ENCODE measurements at regions of chr20 and their contacts with region 1.

Region 1: GRCh38 chr20:49685809-49686208 is 27.9 kb downstream of the B4GALT5 start:
- DNase-seq: no peak
- H3K4me3 ChIP-seq: no peak overlapping the region
- H3K27ac ChIP-seq: no peak overlapping the region
- H3K4me1 ChIP-seq: peaks cover 14% of the 10 kb centered on the region
- H3K27me3 ChIP-seq: no peaks in the 10 kb centered on the region
- CTCF ChIP-seq: no peak
- POLR2A ChIP-seq: no peak

Region 2: GRCh38 chr20:49661560-49662329 is 24.1 kb before region 1 on chr20:
- CTCF ChIA-PET with region 1: interaction called, 10 read pairs
- POLR2A ChIA-PET with region 1: no interaction called
- dilution Hi-C with region 1: no loop called
- intact Hi-C with region 1: loop called (anchors 1 kb)
- DNase-seq: peak; percentile 52
- H3K4me3 ChIP-seq: no peak overlapping the region
- H3K27ac ChIP-seq: no peak overlapping the region
- H3K4me1 ChIP-seq: peaks cover 19% of the 10 kb centered on the region
- H3K27me3 ChIP-seq: no peaks in the 10 kb centered on the region
- CTCF ChIP-seq: no peak
- POLR2A ChIP-seq: no peak

Region 3: DNA sequence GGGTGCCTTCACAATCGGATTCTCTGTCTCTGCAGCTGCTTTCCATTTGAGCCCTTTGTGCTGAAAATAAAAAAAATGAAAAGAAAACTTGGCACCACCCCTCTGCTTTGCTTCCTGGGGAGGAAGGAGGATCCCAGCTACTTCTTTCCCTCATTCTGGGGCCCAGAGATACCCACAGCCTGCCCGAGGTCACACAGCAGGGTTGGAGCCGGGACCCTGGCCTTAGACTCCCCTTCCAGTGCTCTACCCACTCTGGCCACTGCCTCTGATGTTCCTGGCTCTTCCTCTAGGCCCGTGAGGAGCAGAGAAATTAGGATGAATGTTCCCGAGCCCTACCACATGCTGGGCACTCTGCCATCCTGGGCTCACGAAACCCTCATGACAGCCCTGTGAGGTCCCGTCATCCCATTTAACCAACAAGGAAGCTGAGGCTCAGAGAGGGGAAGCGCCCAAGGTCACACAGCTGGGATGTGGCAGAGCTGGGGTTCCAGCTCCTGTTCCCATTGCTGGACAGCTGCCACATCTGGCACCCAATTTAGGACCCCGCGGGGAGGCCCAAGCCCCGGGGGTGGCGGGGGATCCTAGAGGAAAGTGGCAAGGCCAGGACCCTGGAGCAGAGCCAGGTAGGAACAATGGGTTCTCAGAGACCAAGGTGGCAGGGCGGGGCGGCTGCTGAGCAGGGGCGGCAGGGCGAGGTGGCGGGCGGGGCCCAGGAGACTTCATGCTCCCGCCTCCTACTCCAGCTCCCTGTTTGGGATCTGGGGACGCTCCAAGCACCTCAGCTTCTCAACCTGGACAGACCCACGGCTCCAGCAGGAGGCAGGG is 581.4 kb after region 1 on chr20:
- CTCF ChIA-PET with region 1: no interaction called
- POLR2A ChIA-PET with region 1: no interaction called
- dilution Hi-C with region 1: no loop called
- intact Hi-C with region 1: no loop called
- DNase-seq: no peak
- H3K4me3 ChIP-seq: no peak overlapping the region
- H3K27ac ChIP-seq: no peak overlapping the region
- H3K4me1 ChIP-seq: no peaks in the 10 kb centered on the region
- H3K27me3 ChIP-seq: peaks cover 0 to 2% of the 10 kb centered on the region in 2 experiments
- CTCF ChIP-seq: no peak
- POLR2A ChIP-seq: no peak

Measured in endothelial cell of umbilical vein (primary cell).